WTC11 (cell line): ENCODE measurements at regions of chr9 and their contacts with region 1.

Region 1: GRCh38 chr9:124326378-124326777 is 68.6 kb downstream of the NEK6 start:
- DNase-seq: no peak
- ATAC-seq: no peak
- H3K4me3 Mint-ChIP-seq: no peak overlapping the region
- H3K27ac Mint-ChIP-seq: no peak overlapping the region
- H3K4me1 Mint-ChIP-seq: no peaks in the 10 kb centered on the region
- H3K27me3 Mint-ChIP-seq: no peaks in the 10 kb centered on the region
- CTCF ChIP-seq: no peak

Region 2: GRCh38 chr9:124126571-124127289 is 199.6 kb before region 1 on chr9:
- CTCF ChIA-PET with region 1: interaction called, 46 read pairs
- POLR2A ChIA-PET with region 1: interaction called, 3 read pairs
- DNase-seq: peak; percentile 92
- ATAC-seq: peak; percentile 73
- H3K4me3 Mint-ChIP-seq: no peak overlapping the region
- H3K27ac Mint-ChIP-seq: no peak overlapping the region
- H3K4me1 Mint-ChIP-seq: peaks cover 7% of the 10 kb centered on the region
- H3K27me3 Mint-ChIP-seq: no peaks in the 10 kb centered on the region; the same call in 1 of the 2 replicates
- CTCF ChIP-seq: peak; percentile 100

Region 3: DNA sequence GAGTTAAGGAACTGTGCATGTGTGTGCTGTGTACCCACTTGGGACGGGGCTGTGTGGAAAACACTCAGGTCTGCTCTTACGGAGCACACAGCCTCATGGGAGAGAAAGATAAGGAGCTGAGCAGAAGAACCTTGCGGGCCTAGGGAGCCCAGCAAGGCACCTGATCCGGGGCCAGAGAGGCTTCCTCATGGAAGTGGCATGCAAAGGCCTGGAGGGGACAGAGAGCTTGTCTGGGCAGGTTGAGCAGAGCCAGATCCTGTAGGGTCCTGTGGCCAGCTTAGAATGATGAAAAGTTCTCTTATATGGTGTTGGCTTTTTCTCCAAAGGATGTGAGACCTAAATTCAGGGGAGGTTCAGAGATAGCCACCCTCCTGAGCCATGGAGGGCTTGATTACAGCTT is 23.5 kb before region 1 on chr9:
- CTCF ChIA-PET with region 1: interaction called, 12 read pairs
- POLR2A ChIA-PET with region 1: no interaction called
- DNase-seq: no peak
- ATAC-seq: no peak
- H3K4me3 Mint-ChIP-seq: no peak overlapping the region
- H3K27ac Mint-ChIP-seq: no peak overlapping the region
- H3K4me1 Mint-ChIP-seq: peaks cover 13% of the 10 kb centered on the region
- H3K27me3 Mint-ChIP-seq: no peaks in the 10 kb centered on the region
- CTCF ChIP-seq: no peak

Region 4: DNA sequence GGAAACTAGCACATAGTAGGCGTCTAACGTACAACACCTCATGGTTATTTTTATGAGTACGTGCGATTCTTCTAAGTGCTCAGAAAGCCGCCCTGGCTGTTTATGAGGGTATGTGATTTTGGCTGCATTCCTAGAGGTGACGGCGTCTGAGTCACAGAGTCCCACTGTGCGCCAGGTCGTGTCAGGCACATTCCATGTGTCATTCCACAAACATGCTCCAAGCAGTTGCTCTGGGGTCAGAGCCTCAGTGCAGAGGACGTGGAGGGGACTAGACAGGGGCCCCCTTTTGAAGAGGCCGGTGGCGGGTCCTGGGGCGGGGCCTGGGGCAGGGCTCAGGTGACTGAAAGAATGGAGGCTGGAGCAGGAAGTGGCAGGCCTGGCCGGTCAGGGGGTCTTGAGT is 16.7 kb before region 1 on chr9:
- CTCF ChIA-PET with region 1: interaction called, 19 read pairs
- POLR2A ChIA-PET with region 1: no interaction called
- DNase-seq: no peak
- ATAC-seq: peak; percentile 23
- H3K4me3 Mint-ChIP-seq: no peak overlapping the region
- H3K27ac Mint-ChIP-seq: no peak overlapping the region
- H3K4me1 Mint-ChIP-seq: peaks cover 5% of the 10 kb centered on the region; the same call in 1 of the 2 replicates
- H3K27me3 Mint-ChIP-seq: no peaks in the 10 kb centered on the region
- CTCF ChIP-seq: no peak

Region 5: GRCh38 chr9:124342776-124343485 is 16.6 kb after region 1 on chr9:
- CTCF ChIA-PET with region 1: interaction called, 14 read pairs
- POLR2A ChIA-PET with region 1: no interaction called
- DNase-seq: no peak
- ATAC-seq: peak; percentile 44
- H3K4me3 Mint-ChIP-seq: no peak overlapping the region
- H3K27ac Mint-ChIP-seq: peak overlapping the region; percentile 7
- H3K4me1 Mint-ChIP-seq: peaks cover 13% of the 10 kb centered on the region
- H3K27me3 Mint-ChIP-seq: no peaks in the 10 kb centered on the region
- CTCF ChIP-seq: no peak

Region 6: GRCh38 chr9:124357721-124358361 is 31.5 kb after region 1 on chr9:
- CTCF ChIA-PET with region 1: interaction called, 11 read pairs
- POLR2A ChIA-PET with region 1: no interaction called
- DNase-seq: no peak
- ATAC-seq: peak; percentile 75
- H3K4me3 Mint-ChIP-seq: no peak overlapping the region
- H3K27ac Mint-ChIP-seq: peak overlapping the region; percentile 40; the same call in 1 of the 2 replicates
- H3K4me1 Mint-ChIP-seq: 0 out of 2 replicates have a peak, but pooled peaks cover 11% of the 10 kb centered on the region
- H3K27me3 Mint-ChIP-seq: no peaks in the 10 kb centered on the region
- CTCF ChIP-seq: no peak